ENCODE measurements at regions of chr1 and their contacts with region 1.

Region 1: GRCh38 chr1:67685067-67685557 is at the start of gene GADD45A:
- DNase-seq: peak; percentile 99
- H3K4me3 ChIP-seq: peak within 1 kb of the TSS; percentile 68 to 87 (median 76)
- H3K27ac ChIP-seq: peak within 1 kb of the TSS; percentile 90 to 98 (median 94)
- H3K4me1 ChIP-seq: peaks cover 0 to 36% (median 15%) of the 10 kb centered on the region in 4 donors
- H3K27me3 ChIP-seq: no peaks in the 10 kb centered on the region
- CTCF ChIP-seq: no peak
- EP300 ChIP-seq: no peak
- POLR2A ChIP-seq: peak; percentile 87 to 96
- total RNA-seq, gene GADD45A: 16.9 to 23.6 (median 19.7) TPM

Region 2: DNA sequence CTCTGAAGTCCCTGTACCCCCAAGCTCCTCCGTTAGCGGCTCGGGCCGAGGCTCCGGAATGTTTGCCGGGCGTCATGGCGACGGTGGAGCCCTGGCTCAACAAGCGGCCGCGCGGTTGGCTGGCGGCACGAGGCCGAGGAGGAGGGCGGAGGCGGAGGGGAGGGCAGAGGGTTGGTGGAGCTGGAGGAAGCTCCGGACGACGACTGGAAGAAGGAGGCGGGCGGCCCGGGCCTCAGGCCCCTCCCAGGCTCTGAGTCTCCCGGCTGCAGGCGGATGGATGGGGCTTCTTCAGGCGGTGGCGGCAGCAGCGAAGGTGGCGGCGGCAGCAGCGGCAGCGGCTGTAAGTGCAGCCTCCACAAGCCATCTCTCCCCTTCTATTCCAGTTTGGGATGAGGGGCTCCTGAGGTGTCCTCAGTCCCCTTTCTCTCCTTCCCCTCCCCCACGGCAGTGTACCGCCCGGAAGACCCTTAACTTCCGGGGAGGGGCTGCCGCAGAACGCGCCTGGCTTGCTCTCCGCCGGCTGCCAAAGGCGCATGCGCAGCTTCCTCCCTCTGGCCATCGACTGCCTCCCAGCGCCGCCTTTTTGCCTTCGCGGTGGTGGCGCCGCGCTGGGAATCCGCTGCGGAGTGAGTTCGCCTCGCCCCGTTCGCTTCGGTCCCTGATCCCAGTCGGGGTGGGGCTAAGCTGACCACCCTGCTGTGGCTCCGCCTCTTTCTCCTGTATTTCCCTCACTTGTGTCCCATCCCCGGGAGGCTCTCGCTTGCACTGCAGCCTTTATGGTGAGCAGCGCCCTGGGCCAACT is 760.2 kb before region 1 on chr1 and contains the starts of genes DNAI4 and MIER1:
- intact Hi-C with region 1: loop called (anchors 10 kb)
- DNase-seq: peak; percentile 99
- H3K4me3 ChIP-seq: peak within 1 kb of the TSS; percentile 59 to 91 (median 74)
- H3K27ac ChIP-seq: peak within 1 kb of the TSS; percentile 89 to 95 (median 92)
- H3K4me1 ChIP-seq: peaks cover 0 to 38% (median 32%) of the 10 kb centered on the region in 4 donors
- H3K27me3 ChIP-seq: no peaks in the 10 kb centered on the region
- CTCF ChIP-seq: peak; percentile 27 to 58 (median 40)
- EP300 ChIP-seq: peak in 2 of 4 donors; percentile 34 to 43
- POLR2A ChIP-seq: peak; percentile 23 to 65
- total RNA-seq, gene DNAI4: 5.6 to 16.1 (median 9.5) TPM
- total RNA-seq, gene MIER1: 49.0 to 65.6 (median 58.4) TPM

Region 3: GRCh38 chr1:67535474-67535873 is 149.6 kb before region 1 on chr1:
- intact Hi-C with region 1: loop called (anchors 5 kb)
- DNase-seq: peak; percentile 88
- H3K4me3 ChIP-seq: no peak overlapping the region
- H3K27ac ChIP-seq: no peak overlapping the region
- H3K4me1 ChIP-seq: peaks cover 0 to 5% (median 0%) of the 10 kb centered on the region in 4 donors
- H3K27me3 ChIP-seq: peaks cover 0 to 3% (median 0%) of the 10 kb centered on the region in 3 donors
- CTCF ChIP-seq: peak; percentile 48 to 75 (median 62)
- EP300 ChIP-seq: no peak
- POLR2A ChIP-seq: no peak

Region 4: DNA sequence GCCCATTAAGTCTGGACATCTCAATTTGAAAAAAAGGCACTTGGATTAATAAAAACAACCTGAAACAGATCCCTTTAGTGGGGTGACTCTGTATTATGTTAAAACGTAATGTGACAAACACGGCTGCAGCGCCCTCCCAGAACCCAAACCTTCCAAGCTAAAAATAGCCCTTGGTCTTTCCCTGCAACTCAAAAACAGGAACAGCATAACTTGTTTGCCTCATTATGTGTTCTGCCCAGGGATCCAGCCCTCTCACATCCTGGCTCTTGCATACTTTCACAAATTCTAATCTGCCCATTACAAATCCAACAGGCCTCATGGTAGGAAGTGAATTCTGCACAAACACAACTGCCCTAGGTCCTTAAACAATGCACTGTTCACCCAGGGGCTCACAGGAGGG is 94.8 kb before region 1 on chr1:
- intact Hi-C with region 1: loop called (anchors 5 kb)
- DNase-seq: peak; percentile 73
- H3K4me3 ChIP-seq: no peak overlapping the region
- H3K27ac ChIP-seq: peak overlapping the region; percentile 31 to 69 (median 50)
- H3K4me1 ChIP-seq: peaks cover 0 to 31% (median 26%) of the 10 kb centered on the region in 4 donors
- H3K27me3 ChIP-seq: no peaks in the 10 kb centered on the region
- CTCF ChIP-seq: no peak
- EP300 ChIP-seq: no peak
- POLR2A ChIP-seq: no peak

Region 5: DNA sequence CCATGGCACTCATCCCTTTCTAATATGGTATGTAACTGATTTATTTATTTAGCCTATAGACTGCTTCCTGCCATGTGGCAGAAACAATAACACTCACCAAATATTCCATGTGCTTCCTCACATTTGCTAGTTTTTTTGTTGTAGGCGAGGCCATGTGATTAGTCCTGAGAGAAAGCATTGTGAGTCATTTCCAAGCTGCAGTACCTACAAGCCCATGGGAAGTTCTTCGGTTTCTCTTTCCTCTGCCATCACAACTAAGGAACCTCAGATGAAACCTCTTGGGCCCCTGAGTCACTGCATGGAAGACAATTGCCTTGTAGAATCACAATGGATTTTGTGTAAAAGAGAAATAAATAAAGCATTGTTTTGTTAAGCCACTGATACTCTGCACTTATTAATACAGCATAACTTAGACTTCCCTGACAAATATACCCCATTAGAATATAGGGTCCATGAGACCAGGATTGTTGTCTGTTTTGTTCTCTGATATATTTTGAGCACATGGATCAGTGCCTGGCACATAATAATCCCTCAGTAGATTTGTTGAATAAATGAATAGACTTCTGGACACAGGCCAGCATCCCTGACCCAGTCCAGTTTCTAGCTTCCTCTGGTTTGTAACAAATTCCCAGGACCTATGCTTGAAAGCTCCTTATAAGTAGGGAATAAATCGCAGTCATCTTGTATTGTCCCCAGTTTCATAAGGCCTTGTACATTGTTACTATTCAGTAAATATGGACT is 58.4 kb before region 1 on chr1:
- intact Hi-C with region 1: no loop called
- DNase-seq: no peak
- H3K4me3 ChIP-seq: no peak overlapping the region
- H3K27ac ChIP-seq: no peak overlapping the region
- H3K4me1 ChIP-seq: peaks cover 0 to 6% (median 3%) of the 10 kb centered on the region in 4 donors
- H3K27me3 ChIP-seq: no peaks in the 10 kb centered on the region
- CTCF ChIP-seq: no peak
- EP300 ChIP-seq: no peak
- POLR2A ChIP-seq: no peak

Region 6: DNA sequence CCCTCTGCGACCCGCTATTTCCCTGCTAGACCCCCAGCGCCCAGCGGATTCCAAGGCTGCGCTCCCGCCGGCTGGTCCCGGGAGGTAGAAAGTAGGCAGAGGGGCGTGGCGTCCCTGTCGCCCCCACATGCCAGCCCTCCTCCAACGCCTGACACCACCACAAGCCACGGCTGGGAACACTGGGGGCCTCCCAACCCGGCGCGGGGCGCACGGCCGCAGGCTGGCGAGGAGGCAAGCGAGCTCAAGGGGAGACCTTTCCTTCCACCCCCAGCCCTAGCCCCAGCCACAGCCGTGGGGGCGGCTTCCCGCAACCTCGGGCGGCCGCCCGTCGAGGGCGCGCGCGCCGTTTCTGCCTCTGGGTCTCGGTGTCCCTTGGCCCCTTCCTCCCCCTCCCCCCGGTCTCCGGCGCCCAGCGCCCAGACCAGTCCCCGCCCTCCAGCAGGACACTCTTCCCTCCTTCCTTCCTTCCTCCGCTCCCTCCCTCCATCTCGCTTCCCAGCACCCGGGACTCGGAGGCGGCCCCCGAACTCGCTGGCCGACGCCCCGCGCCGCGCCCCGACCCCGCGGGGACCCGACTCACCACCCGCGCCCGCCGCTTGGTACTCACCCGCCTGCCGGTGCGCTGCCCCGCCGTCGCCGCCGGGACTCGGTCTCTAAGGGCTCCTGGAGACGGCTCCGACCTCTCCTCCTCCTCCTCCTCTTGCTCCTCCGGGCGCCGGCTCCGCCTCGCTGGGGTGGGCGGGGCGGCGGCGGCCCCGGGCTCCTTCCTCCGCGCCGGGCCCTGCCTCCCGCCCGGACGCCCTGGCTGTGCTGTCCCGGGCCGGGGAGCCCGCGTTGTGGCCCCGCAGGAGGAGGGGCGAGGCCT is 147.9 kb after region 1 on chr1 and contains the start of gene GNG12:
- intact Hi-C with region 1: loop called (anchors 2 kb)
- DNase-seq: peak; percentile 89
- H3K4me3 ChIP-seq: peak within 1 kb of the TSS; percentile 67 to 78 (median 72)
- H3K27ac ChIP-seq: peak within 1 kb of the TSS; percentile 81 to 92 (median 84)
- H3K4me1 ChIP-seq: peaks cover 0 to 32% (median 18%) of the 10 kb centered on the region in 4 donors
- H3K27me3 ChIP-seq: no peaks in the 10 kb centered on the region
- CTCF ChIP-seq: no peak
- EP300 ChIP-seq: no peak
- POLR2A ChIP-seq: no peak
- total RNA-seq, gene GNG12: 41.9 to 58.2 (median 46.7) TPM

Region 7: DNA sequence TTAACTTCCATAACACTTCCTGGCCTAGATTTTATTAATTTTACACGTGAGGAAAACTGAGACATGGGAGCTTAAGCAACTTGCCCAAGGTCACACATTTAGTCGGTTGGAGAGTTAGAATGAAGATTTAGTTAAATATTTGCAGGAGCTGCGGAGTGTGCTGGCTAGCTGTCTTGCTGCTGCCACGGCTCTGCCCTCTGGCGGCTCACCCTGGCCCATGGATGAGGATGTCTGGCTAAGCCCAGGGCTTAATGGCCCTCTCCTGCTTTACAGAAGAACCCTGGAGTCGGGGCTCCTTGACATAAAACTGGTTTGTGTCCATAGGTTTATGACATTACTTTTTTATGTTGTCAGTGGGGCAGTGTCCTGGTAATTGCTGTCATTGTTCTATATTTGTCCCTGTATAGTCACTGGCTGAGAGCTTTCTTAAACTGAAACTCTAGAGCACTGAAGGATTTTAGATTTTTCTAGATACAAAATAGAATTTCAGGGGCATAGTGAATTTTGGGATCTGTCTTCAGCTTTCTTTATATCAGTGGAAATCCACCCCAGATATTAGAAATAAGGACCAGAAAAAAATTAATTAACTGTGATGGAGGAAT is 636.1 kb after region 1 on chr1:
- intact Hi-C with region 1: loop called (anchors 10 kb)
- DNase-seq: peak; percentile 87
- H3K4me3 ChIP-seq: no peak overlapping the region
- H3K27ac ChIP-seq: peak overlapping the region; percentile 70 to 82 (median 78)
- H3K4me1 ChIP-seq: peaks cover 0 to 47% (median 23%) of the 10 kb centered on the region in 4 donors
- H3K27me3 ChIP-seq: no peaks in the 10 kb centered on the region
- CTCF ChIP-seq: peak; percentile 22 to 81 (median 76)
- EP300 ChIP-seq: no peak
- POLR2A ChIP-seq: no peak